Ascending aorta (tissue), 2 donors: ENCODE measurements at regions of chr1 and their contacts with region 1.

Region 1: GRCh38 chr1:1574721-1575537 is at the start of gene SSU72:
- DNase-seq: peak; percentile 53 to 95
- H3K4me3 ChIP-seq: peak within 1 kb of the TSS; percentile 97 to 99
- H3K27ac ChIP-seq: peak within 1 kb of the TSS; percentile 97 to 99
- H3K4me1 ChIP-seq: peaks cover 8 to 13% of the 10 kb centered on the region in 2 donors
- H3K27me3 ChIP-seq: no peaks in the 10 kb centered on the region
- CTCF ChIP-seq: peak in 1 of 3 experiments; percentile 7
- total RNA-seq, gene SSU72: 50.1 TPM

Region 2: DNA sequence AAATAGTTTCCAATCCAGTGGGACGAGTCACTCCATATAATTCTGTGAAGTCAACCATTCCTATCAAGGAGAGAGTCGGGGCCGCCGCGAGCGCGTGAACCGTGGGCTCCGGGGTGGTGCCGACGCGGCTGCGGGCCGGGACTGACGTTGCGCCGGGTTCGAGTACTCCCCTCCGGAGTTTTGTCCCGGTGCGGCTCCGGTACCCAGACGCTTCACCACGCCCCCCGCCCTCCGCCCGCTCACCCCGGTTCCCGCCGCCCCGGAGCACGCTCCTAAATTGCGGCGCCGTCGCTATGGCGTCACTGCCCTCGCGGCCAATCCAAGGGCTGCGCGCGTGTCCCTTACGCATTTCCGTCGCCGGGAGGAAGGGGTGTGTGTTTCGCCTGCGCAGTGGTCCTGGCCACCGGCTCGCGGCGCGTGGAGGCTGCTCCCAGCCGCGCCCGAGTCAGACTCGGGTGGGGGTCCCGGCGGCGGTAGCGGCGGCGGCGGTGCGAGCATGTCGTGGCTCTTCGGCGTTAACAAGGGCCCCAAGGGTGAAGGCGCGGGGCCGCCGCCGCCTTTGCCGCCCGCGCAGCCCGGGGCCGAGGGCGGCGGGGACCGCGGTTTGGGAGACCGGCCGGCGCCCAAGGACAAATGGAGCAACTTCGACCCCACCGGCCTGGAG is 103.4 kb before region 1 on chr1 and contains the start of gene ATAD3B:
- intact Hi-C with region 1: loop called (anchors 2 kb)
- DNase-seq: peak; percentile 67 to 96
- H3K4me3 ChIP-seq: peak within 1 kb of the TSS; percentile 73 to 81
- H3K27ac ChIP-seq: peak within 1 kb of the TSS; percentile 72 to 77
- H3K4me1 ChIP-seq: peaks cover 0 to 22% of the 10 kb centered on the region in 2 donors
- H3K27me3 ChIP-seq: no peaks in the 10 kb centered on the region
- CTCF ChIP-seq: no peak
- total RNA-seq, gene ATAD3B: 14.2 TPM

Region 3: GRCh38 chr1:1511533-1512285 is 63.2 kb before region 1 on chr1 and contains the start of gene ATAD3A:
- intact Hi-C with region 1: loop called (anchors 1 kb)
- DNase-seq: peak; percentile 89 to 99
- H3K4me3 ChIP-seq: peak within 1 kb of the TSS; percentile 81
- H3K27ac ChIP-seq: peak within 1 kb of the TSS; percentile 85 to 93
- H3K4me1 ChIP-seq: peaks cover 0 to 7% of the 10 kb centered on the region in 2 donors
- H3K27me3 ChIP-seq: no peaks in the 10 kb centered on the region
- CTCF ChIP-seq: no peak
- total RNA-seq, gene ATAD3A: 46.3 TPM

Region 4: GRCh38 chr1:1615256-1616044 is 40.5 kb after region 1 on chr1 and contains the start of gene MIB2:
- intact Hi-C with region 1: loop called (anchors 1 kb)
- DNase-seq: peak; percentile 74 to 97
- H3K4me3 ChIP-seq: peak within 1 kb of the TSS; percentile 97 to 100
- H3K27ac ChIP-seq: peak within 1 kb of the TSS; percentile 100
- H3K4me1 ChIP-seq: peaks cover 15 to 25% of the 10 kb centered on the region in 2 donors
- H3K27me3 ChIP-seq: no peaks in the 10 kb centered on the region
- CTCF ChIP-seq: peak in 1 of 3 experiments; percentile 18
- total RNA-seq, gene MIB2: 96.9 TPM

Region 5: DNA sequence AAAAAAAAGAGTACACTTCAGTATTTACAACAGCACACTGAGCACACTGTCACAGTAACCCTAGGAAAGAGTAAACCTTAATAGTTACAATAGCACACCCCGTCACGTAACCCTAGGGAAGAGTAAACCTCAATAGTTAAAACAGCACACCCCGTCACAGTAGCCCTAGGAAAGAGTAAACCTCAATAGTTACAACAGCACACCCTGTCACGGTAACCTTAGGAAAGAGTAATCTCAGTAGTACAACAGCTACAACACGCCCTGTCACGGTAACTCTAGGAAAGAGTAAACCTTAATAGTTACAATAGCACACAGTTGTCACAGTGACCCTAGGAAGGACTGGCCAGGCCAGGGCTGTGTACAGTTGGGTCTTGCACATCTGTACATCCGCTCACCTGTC is 146.3 kb after region 1 on chr1:
- intact Hi-C with region 1: loop called (anchors 2 kb)
- DNase-seq: no peak
- H3K4me3 ChIP-seq: no peak overlapping the region
- H3K27ac ChIP-seq: no peak overlapping the region
- H3K4me1 ChIP-seq: no peaks in the 10 kb centered on the region
- H3K27me3 ChIP-seq: no peaks in the 10 kb centered on the region
- CTCF ChIP-seq: no peak